Activated T-helper 1 cell treated with anti-CD3 and anti-CD28 coated beads, Interleukin-12 subunit alpha, Interleukin-12 subunit beta, Interleukin-2, Interleukin-4 antibody, amounts not matched to agents 30 ng/mL and 10 ng/mL and 1 ng/mL, durations not matched to agents 14 hours and 24 hours and 36 hours (primary cell): ENCODE measurements at regions of chr21 and their contacts with region 1.

Region 1: GRCh38 chr21:34129039-34129891 is 55.9 kb downstream of the MRPS6 start:
- DNase-seq: peak; percentile 72
- H3K4me3 Mint-ChIP-seq: peak overlapping the region; percentile 64
- H3K27ac Mint-ChIP-seq: peak overlapping the region; percentile 97
- H3K4me1 Mint-ChIP-seq: peaks cover 79% of the 10 kb centered on the region
- H3K27me3 Mint-ChIP-seq: no peaks in the 10 kb centered on the region

Region 2: GRCh38 chr21:33894736-33895288 is 234.5 kb before region 1 on chr21:
- intact Hi-C with region 1: no loop called
- DNase-seq: peak; percentile 35
- H3K4me3 Mint-ChIP-seq: peak overlapping the region; percentile 1
- H3K27ac Mint-ChIP-seq: peak overlapping the region; percentile 43
- H3K4me1 Mint-ChIP-seq: peaks cover 14% of the 10 kb centered on the region
- H3K27me3 Mint-ChIP-seq: peaks cover 5% of the 10 kb centered on the region

Region 3: GRCh38 chr21:33947451-33948095 is 181.7 kb before region 1 on chr21:
- intact Hi-C with region 1: loop called (anchors 1 kb)
- DNase-seq: peak; percentile 85
- H3K4me3 Mint-ChIP-seq: peak overlapping the region; percentile 65
- H3K27ac Mint-ChIP-seq: peak overlapping the region; percentile 97
- H3K4me1 Mint-ChIP-seq: peaks cover 77% of the 10 kb centered on the region
- H3K27me3 Mint-ChIP-seq: peaks cover 4% of the 10 kb centered on the region

Region 4: GRCh38 chr21:34078915-34079314 is 50.4 kb before region 1 on chr21:
- intact Hi-C with region 1: loop called (anchors 2 kb)
- DNase-seq: no peak
- H3K4me3 Mint-ChIP-seq: peak overlapping the region; percentile 61
- H3K27ac Mint-ChIP-seq: peak overlapping the region; percentile 70
- H3K4me1 Mint-ChIP-seq: peaks cover 96% of the 10 kb centered on the region
- H3K27me3 Mint-ChIP-seq: no peaks in the 10 kb centered on the region

Region 5: GRCh38 chr21:34154878-34155277 is 25.6 kb after region 1 on chr21:
- intact Hi-C with region 1: loop called (anchors 2 kb)
- DNase-seq: peak; percentile 47
- H3K4me3 Mint-ChIP-seq: no peak overlapping the region
- H3K27ac Mint-ChIP-seq: peak overlapping the region; percentile 86
- H3K4me1 Mint-ChIP-seq: peaks cover 53% of the 10 kb centered on the region
- H3K27me3 Mint-ChIP-seq: no peaks in the 10 kb centered on the region

Region 6: DNA sequence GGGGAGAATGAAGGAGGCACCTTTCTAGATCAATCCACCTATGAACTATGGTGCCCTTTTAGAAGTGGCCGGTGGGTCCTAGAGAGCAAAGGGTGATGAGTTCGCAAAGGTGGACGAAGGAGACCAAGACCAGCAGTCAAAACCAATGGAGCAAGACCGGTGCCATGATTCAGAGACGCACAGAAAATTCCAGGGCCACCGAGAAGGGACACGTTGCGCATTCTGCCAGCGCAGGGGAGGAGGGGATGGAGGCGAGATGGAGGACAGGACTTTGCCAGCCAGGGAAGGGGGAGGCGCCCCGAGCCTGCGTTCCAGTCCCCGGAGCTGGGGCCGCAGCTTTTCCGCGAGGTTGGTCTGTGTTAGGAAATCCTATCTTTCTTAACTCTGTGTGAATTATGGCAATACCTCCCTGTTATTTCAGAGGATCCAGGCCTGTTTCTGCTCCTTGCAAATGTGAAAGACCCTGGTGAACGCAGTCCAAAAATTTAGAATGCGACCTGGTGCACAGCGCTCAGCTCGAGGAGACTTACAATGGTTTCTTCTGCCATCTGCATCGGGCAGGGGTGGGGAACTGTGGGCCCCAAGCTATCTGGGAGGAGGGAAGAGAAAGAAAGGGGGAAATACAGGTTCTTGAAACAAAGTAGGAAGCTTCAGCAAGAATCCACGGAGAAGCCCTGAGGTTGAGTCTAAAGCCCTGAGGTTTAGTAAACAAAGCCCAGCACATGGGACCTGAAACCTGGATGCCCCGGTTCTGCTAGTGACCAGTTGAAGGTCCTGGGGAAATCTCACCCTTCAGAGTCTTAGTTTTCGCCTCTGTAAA is 73.5 kb after region 1 on chr21:
- intact Hi-C with region 1: loop called (anchors 1 kb)
- DNase-seq: no peak
- H3K4me3 Mint-ChIP-seq: no peak overlapping the region
- H3K27ac Mint-ChIP-seq: peak overlapping the region; percentile 48
- H3K4me1 Mint-ChIP-seq: peaks cover 71% of the 10 kb centered on the region
- H3K27me3 Mint-ChIP-seq: no peaks in the 10 kb centered on the region

Region 7: GRCh38 chr21:34280389-34280795 is 151.1 kb after region 1 on chr21:
- intact Hi-C with region 1: no loop called
- DNase-seq: no peak
- H3K4me3 Mint-ChIP-seq: no peak overlapping the region
- H3K27ac Mint-ChIP-seq: no peak overlapping the region
- H3K4me1 Mint-ChIP-seq: peaks cover 8% of the 10 kb centered on the region
- H3K27me3 Mint-ChIP-seq: peaks cover 9% of the 10 kb centered on the region